Lower lobe of right lung (tissue), 2 donors: ENCODE measurements at regions of chr5 and their contacts with region 1.

Region 1: DNA sequence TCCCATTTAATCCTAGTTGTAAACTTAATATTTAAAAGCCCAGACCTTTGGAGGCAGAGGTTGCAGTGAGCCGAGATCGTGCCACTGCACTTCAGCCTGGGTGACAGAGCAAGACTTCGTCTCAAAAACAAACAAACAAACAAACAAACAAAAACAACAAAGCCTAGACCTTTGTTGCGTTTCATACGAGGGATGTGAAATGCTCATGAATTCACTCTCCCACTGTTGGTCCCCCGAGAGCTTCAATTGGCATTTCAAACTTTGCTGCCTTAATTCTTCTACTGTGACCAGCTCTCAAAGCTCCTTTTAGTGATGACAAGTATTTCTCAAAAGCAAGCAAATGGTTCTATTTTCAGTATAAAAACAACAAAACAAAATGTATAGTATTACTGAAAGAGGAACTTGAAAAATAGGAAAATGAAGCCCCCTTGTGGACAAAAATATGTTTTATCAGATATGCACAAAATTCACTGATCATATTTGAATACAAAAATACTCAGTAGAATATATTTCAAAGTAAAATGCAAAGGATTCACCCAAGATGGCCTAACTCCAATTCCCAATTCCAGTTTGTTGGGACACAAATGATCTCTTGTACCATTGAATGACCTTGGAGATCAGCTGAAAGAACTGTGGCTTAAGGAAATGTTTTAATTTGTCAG is 140.4 kb downstream of the ESM1 start:
- DNase-seq: no peak
- ATAC-seq: peak in 1 of 2 donors; percentile 56
- H3K4me3 ChIP-seq: peak overlapping the region; percentile 32
- H3K27ac ChIP-seq: peak overlapping the region; percentile 13
- H3K4me1 ChIP-seq: peaks cover 9% of the 10 kb centered on the region
- H3K27me3 ChIP-seq: no peaks in the 10 kb centered on the region
- CTCF ChIP-seq: peak; percentile 70

Region 2: DNA sequence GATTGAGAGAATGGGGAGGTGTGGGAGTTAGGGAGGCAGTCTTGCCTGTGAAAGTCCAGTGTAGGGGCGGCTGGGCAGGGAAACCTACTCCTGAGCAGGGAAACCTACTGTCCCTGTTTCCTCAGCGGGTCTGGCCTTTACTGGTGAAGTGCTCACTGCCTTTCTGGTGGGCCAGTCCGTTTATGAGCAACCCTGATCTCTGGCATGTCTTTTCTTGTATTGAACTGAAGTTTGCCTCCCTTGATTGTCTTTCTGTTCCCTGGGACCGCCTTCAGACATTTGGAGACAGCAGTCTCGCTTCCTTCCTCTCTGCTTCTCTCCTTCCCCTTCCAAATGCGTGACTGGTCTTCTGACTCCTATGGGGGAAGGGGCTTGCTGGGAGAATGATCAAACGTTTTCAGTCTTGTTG is 324.6 kb before region 1 on chr5:
- intact Hi-C with region 1: loop called (anchors 5 kb)
- DNase-seq: no peak
- ATAC-seq: no peak
- H3K4me3 ChIP-seq: peak overlapping the region; percentile 100
- H3K27ac ChIP-seq: peak overlapping the region; percentile 96
- H3K4me1 ChIP-seq: peaks cover 65% of the 10 kb centered on the region
- H3K27me3 ChIP-seq: no peaks in the 10 kb centered on the region
- CTCF ChIP-seq: no peak